ENCODE measurements at regions of chr4 and their contacts with region 1.

Region 1: GRCh38 chr4:122914292-122914904 is 8.0 kb downstream of the NUDT6 start:
- DNase-seq: no peak
- H3K4me3 ChIP-seq: no peak overlapping the region
- H3K27ac ChIP-seq: no peak overlapping the region
- H3K4me1 ChIP-seq: no peaks in the 10 kb centered on the region
- H3K27me3 ChIP-seq: no peaks in the 10 kb centered on the region
- CTCF ChIP-seq: no peak
- EP300 ChIP-seq: no peak
- POLR2A ChIP-seq: no peak

Region 2: DNA sequence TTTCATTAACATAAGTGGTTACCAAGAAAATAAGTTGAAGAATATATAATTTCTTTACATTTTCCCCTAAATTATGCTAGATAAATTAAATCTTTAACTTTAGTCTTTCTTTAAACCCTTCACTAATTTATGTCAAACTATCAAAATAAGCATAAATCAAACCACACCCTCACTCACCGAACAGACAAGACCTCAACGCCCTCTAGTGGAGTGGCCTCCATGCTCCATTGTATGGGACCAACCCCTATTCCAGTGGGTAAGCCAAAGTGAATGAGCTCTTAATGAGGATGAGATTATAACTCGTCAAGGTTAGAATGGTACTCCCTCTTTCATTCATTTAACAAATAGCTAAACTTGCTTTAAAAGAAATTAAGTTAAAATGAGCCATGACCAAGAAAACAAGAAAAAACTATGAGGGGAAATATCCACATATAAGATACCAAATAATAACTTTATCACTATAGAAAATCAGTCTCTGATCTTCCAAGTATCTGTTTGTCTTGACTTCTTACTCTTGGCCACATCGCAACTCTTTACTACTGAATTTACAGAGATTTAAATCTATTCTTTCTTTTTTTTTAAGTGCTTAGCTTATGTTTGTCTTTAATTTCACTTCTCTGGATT is 197.5 kb before region 1 on chr4:
- intact Hi-C with region 1: no loop called
- DNase-seq: peak in 4 of 5 donors; percentile 23 to 53 (median 47)
- H3K4me3 ChIP-seq: no peak overlapping the region
- H3K27ac ChIP-seq: no peak overlapping the region
- H3K4me1 ChIP-seq: peaks cover 2% of the 10 kb centered on the region
- H3K27me3 ChIP-seq: no peaks in the 10 kb centered on the region
- CTCF ChIP-seq: no peak
- EP300 ChIP-seq: no peak
- POLR2A ChIP-seq: no peak

Region 3: DNA sequence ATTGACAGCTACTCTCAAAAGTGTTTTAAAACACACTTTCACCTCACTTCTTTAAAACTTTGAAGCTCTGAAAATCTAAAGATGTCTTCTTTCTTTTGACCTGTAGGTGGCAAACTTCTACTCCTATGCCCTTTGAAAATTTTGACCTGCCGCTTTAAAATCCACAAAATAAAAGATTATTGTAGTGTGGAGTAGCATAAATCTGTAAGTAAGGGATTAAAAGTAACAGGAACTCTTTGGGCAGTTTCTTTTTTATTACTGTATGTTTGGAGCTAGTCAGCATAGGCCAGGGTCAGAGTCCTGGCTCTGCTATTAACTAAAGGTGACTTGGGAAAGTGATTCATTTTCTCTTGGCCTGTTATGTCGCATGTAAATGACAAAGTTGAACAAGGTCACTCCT is 156.4 kb before region 1 on chr4:
- intact Hi-C with region 1: loop called in 1 of 4 experiments (anchors 5 kb)
- DNase-seq: no peak
- H3K4me3 ChIP-seq: no peak overlapping the region
- H3K27ac ChIP-seq: no peak overlapping the region
- H3K4me1 ChIP-seq: no peaks in the 10 kb centered on the region
- H3K27me3 ChIP-seq: no peaks in the 10 kb centered on the region
- CTCF ChIP-seq: peak; percentile 22 to 77 (median 50)
- EP300 ChIP-seq: no peak
- POLR2A ChIP-seq: no peak

Measured in ovary (tissue), 10 donors.